Dorsolateral prefrontal cortex (tissue), 120 donors: ENCODE measurements at regions of chr3 and their contacts with region 1.

Region 1: DNA sequence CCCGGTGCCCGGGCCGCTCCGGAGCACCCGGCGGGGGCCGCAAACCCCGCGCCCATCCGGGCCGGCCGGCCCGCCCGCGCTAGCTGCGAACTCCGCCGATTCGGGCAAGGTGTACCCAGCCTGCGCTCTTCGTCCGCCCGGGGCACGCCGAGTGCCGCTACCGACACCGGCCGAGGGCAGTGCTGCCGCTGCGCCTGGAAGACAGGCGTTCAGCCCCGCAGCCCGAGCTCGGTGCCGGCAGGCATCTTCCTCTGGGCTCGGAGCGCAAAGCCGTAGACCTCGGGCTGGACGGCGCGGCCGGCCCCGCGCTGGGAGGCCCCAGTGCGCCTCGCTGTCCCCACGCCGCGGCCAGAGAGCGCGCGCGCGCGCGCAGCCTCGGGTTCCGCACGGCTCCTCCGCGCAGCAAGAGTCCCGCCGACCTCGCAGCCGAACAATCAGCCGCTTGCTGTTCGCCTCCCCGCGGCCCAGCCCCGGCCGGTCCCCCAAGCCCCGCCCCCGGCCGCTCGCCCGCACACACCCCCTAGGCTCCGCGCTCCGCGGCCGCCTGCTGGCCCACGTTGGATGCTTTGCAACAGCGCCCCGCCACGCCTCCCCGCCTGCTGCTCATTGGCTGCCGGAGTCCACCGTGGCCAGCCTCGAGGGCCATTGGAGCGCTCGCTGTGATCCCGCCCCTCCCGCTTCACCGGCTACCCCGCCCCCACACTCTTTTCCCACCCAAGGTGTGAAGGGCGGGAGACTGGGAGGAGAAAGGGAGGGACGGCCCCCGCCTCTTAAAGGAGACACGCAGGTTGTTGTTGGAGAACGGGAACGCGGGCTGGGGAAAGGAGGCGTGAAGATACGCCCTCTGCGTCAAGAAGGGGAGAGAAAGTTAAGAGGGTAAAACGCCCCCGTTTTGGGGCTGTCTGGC is at the start of gene LRIG1:
- DNase-seq: peak; percentile 98 to 100 (median 99)
- H3K4me3 ChIP-seq: peak within 1 kb of the TSS; percentile 65 to 98 (median 88)
- H3K27ac ChIP-seq: peak within 1 kb of the TSS; percentile 32 to 98 (median 92)
- H3K27me3 ChIP-seq: no peaks in the 10 kb centered on the region
- CTCF ChIP-seq: peak in 51 of 56 donors; percentile 13 to 76 (median 52)
- total RNA-seq, gene LRIG1: 65.6 to 291 (median 118) TPM

Region 2: GRCh38 chr3:65811086-65811761 is 689.6 kb before region 1 on chr3:
- intact Hi-C with region 1: no loop called
- DNase-seq: peak in 4 of 10 donors; percentile 11 to 43 (median 24)
- H3K4me3 ChIP-seq: no peak overlapping the region
- H3K27ac ChIP-seq: no peak overlapping the region
- H3K27me3 ChIP-seq: no peaks in the 10 kb centered on the region
- CTCF ChIP-seq: no peak

Region 3: DNA sequence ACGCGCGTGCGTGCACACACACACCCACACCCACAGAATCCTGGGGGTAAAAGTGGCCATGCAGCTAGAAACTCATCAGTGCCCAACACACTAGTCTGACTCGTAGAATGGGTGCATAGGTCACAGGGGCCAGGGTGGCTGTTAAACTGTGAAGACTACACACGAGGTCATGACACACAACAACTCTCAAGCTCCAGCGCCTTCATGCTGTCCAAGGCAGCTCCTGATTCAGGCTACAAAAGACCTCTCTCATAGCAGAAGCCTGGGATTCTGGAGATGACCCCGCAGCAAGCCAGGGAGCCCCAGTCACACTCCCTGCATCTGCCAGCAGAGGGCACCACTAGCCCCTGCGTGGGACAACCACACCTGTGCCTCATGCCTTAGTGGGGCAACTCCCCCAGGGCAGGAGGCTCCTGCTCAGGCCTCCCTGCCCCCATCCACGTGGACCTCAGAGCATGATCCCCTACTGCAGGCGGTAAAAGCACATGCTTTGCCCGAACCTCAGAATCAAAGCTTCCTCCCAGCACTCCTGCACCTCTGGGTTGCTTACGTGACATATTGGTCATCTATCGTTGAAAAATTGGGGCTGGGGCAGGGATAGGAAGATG is 93.1 kb before region 1 on chr3:
- intact Hi-C with region 1: loop called in 1 of 2 experiments (anchors 2 kb)
- DNase-seq: peak in 9 of 10 donors; percentile 52 to 83 (median 73)
- H3K4me3 ChIP-seq: no peak overlapping the region
- H3K27ac ChIP-seq: peak overlapping the region in 54 of 59 donors; percentile 14 to 93 (median 82)
- H3K27me3 ChIP-seq: no peaks in the 10 kb centered on the region
- CTCF ChIP-seq: peak; percentile 51 to 97 (median 89)

Region 4: GRCh38 chr3:66450390-66451022 is 50.3 kb before region 1 on chr3:
- intact Hi-C with region 1: loop called in 1 of 2 experiments (anchors 5 kb)
- DNase-seq: peak in 3 of 10 donors; percentile 50 to 68 (median 53)
- H3K4me3 ChIP-seq: peak overlapping the region in 20 of 59 donors; percentile 1 to 42 (median 20)
- H3K27ac ChIP-seq: peak overlapping the region in 52 of 59 donors; percentile 16 to 91 (median 80)
- H3K27me3 ChIP-seq: no peaks in the 10 kb centered on the region
- CTCF ChIP-seq: no peak

Region 5: GRCh38 chr3:66483406-66483906 is 17.4 kb before region 1 on chr3:
- intact Hi-C with region 1: loop called (anchors 2 kb)
- DNase-seq: peak in 9 of 10 donors; percentile 34 to 63 (median 46)
- H3K4me3 ChIP-seq: peak overlapping the region in 47 of 59 donors; percentile 0 to 58 (median 28)
- H3K27ac ChIP-seq: peak overlapping the region; percentile 63 to 98 (median 93)
- H3K27me3 ChIP-seq: no peaks in the 10 kb centered on the region
- CTCF ChIP-seq: peak in 6 of 56 donors; percentile 0 to 14 (median 6)

Region 6: DNA sequence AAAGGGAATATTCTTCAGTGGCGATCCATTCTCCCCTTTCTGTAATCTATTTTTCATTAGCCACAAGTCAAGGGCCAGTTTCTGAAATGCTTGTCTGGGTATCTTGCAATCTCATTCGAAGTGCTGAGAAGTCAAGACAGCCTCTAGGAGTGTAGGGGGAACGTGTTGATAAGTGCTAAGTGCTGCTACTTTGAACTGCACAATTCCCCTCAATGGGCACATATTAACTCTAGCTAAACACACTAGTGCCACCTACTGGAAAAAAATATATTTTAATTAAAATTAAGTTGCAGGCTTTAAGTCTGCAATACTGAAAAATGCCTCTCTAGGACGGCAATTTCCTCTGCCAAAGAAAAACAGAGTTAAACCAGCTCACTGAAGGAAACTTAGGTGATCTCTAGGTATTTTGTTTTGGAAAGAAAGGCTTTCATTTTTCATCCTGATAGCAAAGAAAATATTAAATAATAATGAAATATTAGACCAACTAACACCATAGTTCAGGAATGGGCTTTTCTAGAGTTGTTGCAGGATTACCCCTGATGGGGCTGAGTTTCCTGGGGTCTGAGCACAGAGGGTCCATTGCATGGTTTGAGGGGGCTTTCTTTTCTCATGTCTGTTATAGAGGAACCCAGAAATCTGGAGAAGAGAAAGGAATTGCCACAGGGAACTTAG is 315.4 kb after region 1 on chr3:
- intact Hi-C with region 1: loop called (anchors 5 kb)
- DNase-seq: no peak
- H3K4me3 ChIP-seq: no peak overlapping the region
- H3K27ac ChIP-seq: no peak overlapping the region
- H3K27me3 ChIP-seq: no peaks in the 10 kb centered on the region
- CTCF ChIP-seq: peak; percentile 51 to 90 (median 76)